Dorsolateral prefrontal cortex (tissue), 120 donors: ENCODE measurements at regions of chr22 and their contacts with region 1.

Region 1: DNA sequence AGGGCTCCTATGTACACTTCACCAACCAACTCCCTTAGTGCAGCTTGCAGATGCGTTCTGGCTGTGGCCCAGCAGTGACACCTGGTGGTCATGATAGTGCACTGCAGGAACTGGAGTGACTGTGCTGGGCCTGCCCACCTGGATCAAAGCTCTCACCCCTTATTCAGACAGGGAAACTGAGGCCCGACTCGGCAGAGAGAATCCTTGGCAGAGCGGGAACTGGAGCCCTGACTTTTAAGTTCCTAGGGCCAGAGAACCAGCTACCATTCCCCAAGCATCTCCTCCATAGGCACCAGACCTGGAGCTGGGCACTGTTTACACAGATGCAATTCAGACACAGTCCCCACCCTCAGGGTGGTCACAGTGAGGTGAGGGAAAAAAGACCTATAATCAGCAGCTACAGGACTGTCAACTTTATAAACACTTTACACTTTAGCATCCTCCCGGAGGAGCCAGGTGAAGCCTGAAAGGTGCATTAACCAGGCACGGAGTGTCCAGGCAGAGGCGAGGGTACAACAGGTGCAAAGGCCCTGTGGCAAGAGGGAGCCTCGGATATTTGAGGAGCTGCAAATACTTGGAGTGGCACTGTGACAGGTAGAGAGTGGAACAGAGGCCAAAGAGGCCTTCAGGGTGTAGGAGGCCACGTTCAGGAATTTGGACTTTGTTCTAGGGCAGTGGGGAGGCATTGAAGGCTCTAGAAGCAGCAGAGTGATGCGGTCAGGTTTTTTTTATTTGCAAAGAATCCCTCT is 22.0 kb downstream of the RHBDD3 start:
- DNase-seq: peak in 9 of 10 donors; percentile 67 to 88 (median 79)
- H3K4me3 ChIP-seq: no peak overlapping the region
- H3K27ac ChIP-seq: no peak overlapping the region
- H3K27me3 ChIP-seq: no peaks in the 10 kb centered on the region
- CTCF ChIP-seq: peak; percentile 80 to 99 (median 96)

Region 2: DNA sequence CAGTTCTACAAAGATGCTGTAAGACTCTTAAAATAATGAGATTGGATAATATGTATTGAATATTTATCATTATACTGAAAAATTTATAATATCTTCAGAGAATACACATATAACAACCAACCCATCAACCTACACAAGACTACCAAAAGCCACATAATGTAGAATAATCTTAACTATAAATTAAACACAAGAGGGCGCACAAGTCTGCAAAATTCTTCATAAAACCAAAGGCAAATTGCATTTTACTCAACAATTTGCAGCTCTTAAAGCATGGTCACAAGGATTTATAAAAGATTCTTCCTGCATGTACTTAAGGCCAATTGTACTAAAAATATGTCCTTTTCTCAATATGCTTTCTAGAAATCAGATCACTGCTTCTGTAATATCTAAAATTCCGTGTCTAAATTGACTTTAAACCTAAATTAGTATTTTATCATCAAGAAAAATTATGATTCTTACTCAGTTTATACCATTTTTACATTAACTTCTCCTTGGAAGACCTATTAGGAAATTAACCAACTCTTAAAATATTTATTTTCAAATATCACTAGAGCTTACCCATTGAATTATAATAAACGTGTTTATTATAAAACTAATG is 645.2 kb before region 1 on chr22:
- intact Hi-C with region 1: loop called (anchors 2 to 10 kb)
- DNase-seq: no peak
- H3K4me3 ChIP-seq: no peak overlapping the region
- H3K27ac ChIP-seq: no peak overlapping the region
- H3K27me3 ChIP-seq: no peaks in the 10 kb centered on the region
- CTCF ChIP-seq: peak; percentile 59 to 96 (median 74)

Region 3: DNA sequence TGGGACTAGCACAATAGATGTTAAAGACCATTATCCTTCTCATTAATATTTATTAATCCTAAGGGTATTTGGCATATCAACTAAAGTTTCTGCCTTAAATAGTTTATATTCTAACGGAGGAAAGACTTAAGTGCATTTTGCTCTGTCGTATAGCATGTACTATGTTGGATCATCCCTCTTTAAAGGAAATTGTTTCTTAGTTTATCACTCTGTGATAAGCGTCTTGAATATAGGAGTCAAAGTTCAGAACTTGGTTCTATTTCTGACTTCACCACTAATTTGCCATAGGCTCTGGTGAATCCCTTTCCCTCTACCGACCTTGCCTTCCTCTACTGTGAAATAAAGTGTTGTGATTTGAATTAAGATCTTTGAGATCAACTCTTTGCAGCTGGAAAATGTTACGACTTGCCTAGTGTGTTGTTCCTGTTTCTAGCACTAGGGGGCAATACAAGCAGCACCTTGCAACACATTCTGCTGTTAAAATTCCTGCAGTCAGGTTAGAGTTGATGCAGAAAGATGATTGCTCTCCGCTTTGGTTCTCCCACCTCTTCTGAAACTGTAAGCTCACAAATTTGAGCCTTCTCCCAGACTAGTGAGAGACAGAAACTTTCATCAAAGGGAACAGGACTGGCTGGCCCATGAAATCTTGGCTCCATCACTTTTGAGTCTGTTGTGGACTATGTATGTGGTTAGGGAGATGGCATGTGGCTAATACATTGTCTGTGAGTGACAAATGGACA is 390.3 kb before region 1 on chr22:
- intact Hi-C with region 1: loop called (anchors 5 to 10 kb)
- DNase-seq: peak in 4 of 10 donors; percentile 12 to 59 (median 45)
- H3K4me3 ChIP-seq: peak overlapping the region in 1 of 59 donors; percentile 1
- H3K27ac ChIP-seq: peak overlapping the region in 2 of 59 donors; percentile 14 to 29
- H3K27me3 ChIP-seq: no peaks in the 10 kb centered on the region
- CTCF ChIP-seq: peak; percentile 81 to 98 (median 93)

Region 4: DNA sequence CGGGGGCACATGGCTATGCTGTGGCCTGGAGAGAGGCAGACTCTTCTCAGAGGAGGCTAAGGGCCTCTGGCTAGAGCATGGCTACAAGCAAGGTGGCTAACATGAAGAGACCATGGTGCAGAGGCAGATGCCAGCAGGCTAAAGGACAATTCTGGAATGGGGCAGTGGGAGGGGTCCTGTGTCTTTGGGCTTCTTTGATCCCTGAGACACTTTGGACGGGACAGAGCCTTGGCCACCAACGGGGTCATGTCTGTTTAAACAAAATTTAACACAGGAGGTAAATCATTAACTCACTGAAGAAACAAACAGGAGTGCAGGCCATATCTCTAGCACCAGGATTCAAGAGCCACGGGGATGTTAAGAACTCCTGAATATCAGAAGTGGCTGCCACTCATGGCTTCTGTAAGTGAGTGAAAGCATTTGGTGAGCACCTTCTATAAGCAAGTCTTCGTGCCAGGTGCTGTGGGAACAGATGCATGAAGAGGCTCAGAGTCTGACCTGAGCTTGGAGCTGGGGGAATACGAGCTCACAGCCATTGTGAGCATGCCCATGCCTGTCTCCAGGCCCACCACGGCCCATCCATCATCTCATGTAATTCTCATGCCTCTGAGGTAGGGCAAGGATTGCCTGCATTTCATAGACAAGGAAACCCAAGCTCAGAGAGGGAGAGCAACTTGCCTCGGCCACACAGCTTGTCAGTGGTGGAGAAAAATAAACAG is 380.8 kb before region 1 on chr22:
- intact Hi-C with region 1: loop called in 1 of 2 experiments (anchors 10 kb)
- DNase-seq: no peak
- H3K4me3 ChIP-seq: no peak overlapping the region
- H3K27ac ChIP-seq: no peak overlapping the region
- H3K27me3 ChIP-seq: no peaks in the 10 kb centered on the region
- CTCF ChIP-seq: no peak

Region 5: GRCh38 chr22:29040385-29041275 is 205.2 kb before region 1 on chr22:
- intact Hi-C with region 1: loop called (anchors 10 kb)
- DNase-seq: peak in 6 of 10 donors; percentile 63 to 80 (median 72)
- H3K4me3 ChIP-seq: peak overlapping the region in 3 of 59 donors; percentile 10 to 19 (median 15)
- H3K27ac ChIP-seq: peak overlapping the region in 50 of 59 donors; percentile 1 to 87 (median 60)
- H3K27me3 ChIP-seq: no peaks in the 10 kb centered on the region
- CTCF ChIP-seq: peak in 55 of 56 donors; percentile 95 to 99 (median 98)

Region 6: DNA sequence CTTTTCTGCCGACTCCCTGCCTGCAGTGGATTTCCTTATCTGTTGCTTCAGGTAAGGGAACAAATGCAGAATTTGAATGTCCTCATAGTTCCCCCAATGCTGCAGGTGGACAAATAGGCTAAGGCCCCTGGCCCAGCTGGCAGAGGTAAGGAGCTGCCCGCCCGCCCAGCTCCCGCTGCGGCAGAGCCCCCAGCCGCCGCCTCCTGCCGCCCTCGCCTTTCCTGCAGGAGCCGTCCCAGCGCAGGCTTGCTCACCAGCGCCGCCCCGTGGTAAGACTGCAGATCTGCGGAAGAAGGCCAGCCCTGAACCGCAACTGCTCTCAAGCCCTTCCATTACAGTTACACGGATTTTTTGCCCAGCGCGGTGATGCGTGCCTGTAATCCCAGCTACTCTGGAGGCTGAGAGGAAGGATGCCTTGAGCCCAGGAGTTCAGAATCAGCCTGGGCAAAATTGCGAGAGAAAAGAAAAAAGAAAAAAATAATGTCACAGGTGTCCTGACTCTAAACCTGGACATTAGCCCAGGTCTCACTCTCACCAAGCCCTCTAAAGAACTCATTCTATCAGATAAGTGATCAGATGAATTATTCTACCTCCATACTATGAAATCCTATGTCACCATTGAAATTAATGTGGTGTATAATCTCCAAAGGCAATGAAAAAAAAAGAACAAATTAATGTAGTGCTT is 91.3 kb before region 1 on chr22:
- intact Hi-C with region 1: loop called in 1 of 2 experiments (anchors 5 kb)
- DNase-seq: peak; percentile 60 to 87 (median 69)
- H3K4me3 ChIP-seq: peak overlapping the region in 51 of 59 donors; percentile 2 to 61 (median 37)
- H3K27ac ChIP-seq: peak overlapping the region in 20 of 59 donors; percentile 3 to 83 (median 63)
- H3K27me3 ChIP-seq: no peaks in the 10 kb centered on the region
- CTCF ChIP-seq: peak; percentile 77 to 99 (median 96)

Region 7: DNA sequence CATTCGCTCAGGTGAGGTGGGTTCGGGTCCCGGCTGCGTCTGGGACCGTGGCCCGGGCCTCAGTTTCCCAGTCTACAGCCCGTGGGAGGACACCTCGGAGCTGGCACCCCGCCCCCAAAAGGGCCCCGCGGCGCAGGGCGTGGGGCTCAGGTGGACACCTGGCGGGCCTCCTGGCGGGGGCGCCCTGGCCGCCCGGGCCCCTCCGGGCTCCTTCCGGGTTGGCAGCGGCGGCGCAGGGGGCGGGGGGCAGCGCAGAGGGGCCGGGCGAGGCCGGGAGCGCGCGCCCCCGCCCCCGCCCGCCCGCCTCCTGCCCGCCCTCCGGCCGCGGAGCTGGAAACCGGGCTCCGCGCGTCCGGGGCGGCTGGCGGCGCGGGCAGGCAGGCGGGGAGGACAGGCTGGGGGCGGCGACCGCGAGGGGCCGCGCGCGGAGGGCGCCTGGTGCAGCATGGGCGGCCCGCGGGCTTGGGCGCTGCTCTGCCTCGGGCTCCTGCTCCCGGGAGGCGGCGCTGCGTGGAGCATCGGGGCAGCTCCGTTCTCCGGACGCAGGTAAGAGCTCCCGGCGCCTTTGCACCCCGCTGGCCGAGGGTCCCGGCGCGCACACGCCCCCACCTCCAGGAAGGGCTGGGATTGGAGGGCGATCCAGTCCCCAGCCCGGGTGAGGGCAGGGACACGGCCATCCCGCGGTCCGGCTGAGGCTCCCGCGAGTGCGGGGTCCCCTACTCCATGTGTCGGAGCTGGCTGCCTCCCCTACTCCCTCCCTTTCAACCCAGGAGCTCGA is 40.0 kb before region 1 on chr22 and contains the start of gene EMID1:
- intact Hi-C with region 1: loop called in 1 of 2 experiments (anchors 2 kb)
- DNase-seq: peak in 3 of 10 donors; percentile 28 to 58 (median 40)
- H3K4me3 ChIP-seq: peak within 1 kb of the TSS; percentile 45 to 78 (median 65)
- H3K27ac ChIP-seq: peak within 1 kb of the TSS in 44 of 59 donors; percentile 1 to 78 (median 46)
- H3K27me3 ChIP-seq: peaks cover 0 to 6% (median 0%) of the 10 kb centered on the region in 45 donors
- CTCF ChIP-seq: peak in 3 of 56 donors; percentile 5 to 16 (median 9)
- total RNA-seq, gene EMID1: 10.3 to 60.6 (median 25.2) TPM

Region 8: GRCh38 chr22:29387921-29388758 is 142.3 kb after region 1 on chr22 and contains the start of gene AP1B1:
- intact Hi-C with region 1: no loop called
- DNase-seq: peak; percentile 81 to 97 (median 92)
- H3K4me3 ChIP-seq: peak within 1 kb of the TSS; percentile 71 to 98 (median 87)
- H3K27ac ChIP-seq: peak within 1 kb of the TSS; percentile 49 to 95 (median 87)
- H3K27me3 ChIP-seq: no peaks in the 10 kb centered on the region
- CTCF ChIP-seq: peak in 24 of 56 donors; percentile 8 to 45 (median 20)
- total RNA-seq, gene AP1B1: 62.6 to 104 (median 87.0) TPM